ENCODE measurements at regions of chr1 and their contacts with region 1.

Region 1: DNA sequence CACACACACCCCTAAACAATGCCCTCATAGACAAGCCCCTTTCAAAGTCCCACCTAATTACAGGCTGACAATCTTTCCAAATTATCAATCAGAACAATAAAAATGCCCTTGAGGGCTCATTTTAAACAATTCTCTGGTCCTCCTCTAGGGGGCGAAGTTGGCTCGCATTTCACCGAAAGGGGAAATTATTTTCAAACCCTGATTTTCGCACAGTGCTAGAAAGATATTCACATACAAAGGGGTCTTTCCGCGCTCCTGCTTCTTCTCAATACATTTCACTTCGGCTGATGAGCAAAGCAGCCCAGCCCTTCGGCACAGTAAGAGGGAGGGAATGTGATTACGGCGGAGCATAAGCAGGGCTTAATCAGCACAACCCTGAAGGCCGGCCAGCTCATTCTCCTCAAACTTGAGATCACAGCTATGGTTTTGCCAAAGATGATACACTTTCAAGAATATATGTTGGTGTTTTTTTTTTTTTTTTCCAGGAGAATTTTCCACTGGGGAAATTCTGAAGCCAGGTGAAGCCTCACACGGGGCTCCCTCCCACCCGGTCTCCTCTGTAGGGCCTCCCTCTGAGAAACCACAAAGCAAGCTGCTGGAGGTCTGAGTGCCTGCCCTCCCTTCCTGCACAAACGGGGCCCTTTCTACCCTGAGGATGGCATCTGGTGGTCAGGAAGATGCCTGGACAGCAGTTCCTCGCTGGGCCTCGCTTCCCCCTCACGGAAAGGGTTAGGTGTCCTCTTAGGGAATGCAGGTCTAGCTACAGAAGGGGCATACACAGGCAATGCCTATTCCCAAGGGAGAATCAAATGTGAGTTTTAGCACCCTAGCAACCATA is 66.9 kb downstream of the GNG12 start:
- DNase-seq: peak; percentile 30
- CTCF ChIP-seq: peak; percentile 69

Region 2: GRCh38 chr1:67561704-67562113 is 204.7 kb before region 1 on chr1:
- CTCF ChIA-PET with region 1: interaction called, 99 read pairs
- POLR2A ChIA-PET with region 1: no interaction called
- DNase-seq: peak; percentile 78
- CTCF ChIP-seq: peak; percentile 80

Region 3: GRCh38 chr1:67735806-67736627 is 30.3 kb before region 1 on chr1:
- CTCF ChIA-PET with region 1: interaction called, 39 read pairs
- POLR2A ChIA-PET with region 1: no interaction called
- DNase-seq: peak; percentile 68
- CTCF ChIP-seq: no peak

Region 4: GRCh38 chr1:67780637-67781036 is 14.3 kb after region 1 on chr1:
- CTCF ChIA-PET with region 1: interaction called, 42 read pairs
- POLR2A ChIA-PET with region 1: no interaction called
- DNase-seq: no peak
- CTCF ChIP-seq: no peak

Region 5: GRCh38 chr1:67814121-67814772 is 47.9 kb after region 1 on chr1:
- CTCF ChIA-PET with region 1: interaction called, 41 read pairs
- POLR2A ChIA-PET with region 1: no interaction called
- DNase-seq: no peak
- CTCF ChIP-seq: no peak

Region 6: DNA sequence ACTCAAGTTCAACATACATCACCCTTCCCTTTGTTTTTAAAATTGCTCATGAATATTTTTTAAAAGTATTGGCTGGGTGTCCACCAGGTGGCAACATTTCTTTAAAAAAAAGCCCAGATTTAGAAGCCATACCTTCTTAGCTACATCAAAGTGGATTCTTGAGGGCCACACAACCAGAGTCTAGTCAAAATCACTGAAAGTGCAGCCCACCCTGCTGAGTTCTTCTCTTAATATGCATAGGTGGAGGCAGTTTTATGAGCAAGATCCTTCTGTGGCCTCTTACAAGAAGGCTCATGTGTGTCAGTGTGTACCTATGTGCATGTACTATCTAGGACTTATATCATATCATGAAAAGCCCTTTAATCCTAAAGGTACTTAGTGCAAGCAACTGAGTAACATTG is 83.8 kb after region 1 on chr1:
- CTCF ChIA-PET with region 1: interaction called, 52 read pairs
- POLR2A ChIA-PET with region 1: no interaction called
- DNase-seq: peak; percentile 18
- CTCF ChIP-seq: peak; percentile 57